B cell (primary cell): ENCODE measurements at regions of chr3 and their contacts with region 1.

Region 1: GRCh38 chr3:64030741-64031140 is 7.4 kb upstream of the PSMD6 start:
- DNase-seq: peak; percentile 88
- ATAC-seq: peak; percentile 96
- H3K4me3 ChIP-seq: peak overlapping the region; percentile 11 to 55 (median 41)
- H3K4me3 Mint-ChIP-seq: peak overlapping the region; percentile 89
- H3K27ac ChIP-seq: peak overlapping the region in 1 of 2 donors; percentile 11
- H3K27ac Mint-ChIP-seq: peak overlapping the region; percentile 69
- H3K4me1 ChIP-seq: peaks cover 3 to 8% of the 10 kb centered on the region in 2 donors
- H3K4me1 Mint-ChIP-seq: peaks cover 7% of the 10 kb centered on the region
- H3K27me3 ChIP-seq: peaks cover 2 to 20% (median 11%) of the 10 kb centered on the region in 4 experiments
- H3K27me3 Mint-ChIP-seq: peaks cover 24% of the 10 kb centered on the region
- CTCF ChIP-seq: peak; percentile 91

Region 2: GRCh38 chr3:63576901-63577335 is 453.8 kb before region 1 on chr3:
- CTCF ChIA-PET with region 1: no interaction called
- POLR2A ChIA-PET with region 1: no interaction called
- intact Hi-C with region 1: no loop called
- DNase-seq: no peak
- ATAC-seq: no peak
- H3K4me3 ChIP-seq: no peak overlapping the region
- H3K4me3 Mint-ChIP-seq: no peak overlapping the region
- H3K27ac ChIP-seq: no peak overlapping the region
- H3K27ac Mint-ChIP-seq: no peak overlapping the region
- H3K4me1 ChIP-seq: no peaks in the 10 kb centered on the region
- H3K4me1 Mint-ChIP-seq: no peaks in the 10 kb centered on the region
- H3K27me3 ChIP-seq: no peaks in the 10 kb centered on the region
- H3K27me3 Mint-ChIP-seq: peaks cover 3% of the 10 kb centered on the region
- CTCF ChIP-seq: no peak

Region 3: DNA sequence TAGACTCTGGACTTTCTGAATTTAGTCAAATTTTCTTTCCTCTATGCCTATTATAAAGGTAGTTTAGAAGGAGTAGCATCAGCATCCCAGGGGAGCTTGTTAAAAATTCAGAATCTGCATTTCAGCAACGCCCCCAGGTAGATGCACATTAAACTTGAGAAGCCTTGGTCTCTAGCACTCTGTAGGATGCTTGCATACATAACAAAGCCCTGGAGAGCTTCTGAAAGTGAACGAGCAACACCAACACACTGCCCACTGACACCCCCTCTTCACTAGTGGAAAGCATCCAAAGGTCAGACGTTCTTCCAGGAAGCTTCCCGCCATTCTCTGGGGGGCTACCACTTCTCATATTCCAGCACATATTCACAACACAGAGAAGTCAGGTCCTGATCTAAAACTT is 188.0 kb after region 1 on chr3:
- CTCF ChIA-PET with region 1: interaction called, 3 read pairs
- POLR2A ChIA-PET with region 1: no interaction called
- intact Hi-C with region 1: loop called (anchors 2 kb)
- DNase-seq: no peak
- ATAC-seq: no peak
- H3K4me3 ChIP-seq: no peak overlapping the region
- H3K4me3 Mint-ChIP-seq: no peak overlapping the region
- H3K27ac ChIP-seq: no peak overlapping the region
- H3K27ac Mint-ChIP-seq: no peak overlapping the region
- H3K4me1 ChIP-seq: peaks cover 0 to 2% of the 10 kb centered on the region in 2 donors
- H3K4me1 Mint-ChIP-seq: peaks cover 7% of the 10 kb centered on the region
- H3K27me3 ChIP-seq: peaks cover 0 to 4% (median 0%) of the 10 kb centered on the region in 4 experiments
- H3K27me3 Mint-ChIP-seq: no peaks in the 10 kb centered on the region
- CTCF ChIP-seq: no peak

Region 4: DNA sequence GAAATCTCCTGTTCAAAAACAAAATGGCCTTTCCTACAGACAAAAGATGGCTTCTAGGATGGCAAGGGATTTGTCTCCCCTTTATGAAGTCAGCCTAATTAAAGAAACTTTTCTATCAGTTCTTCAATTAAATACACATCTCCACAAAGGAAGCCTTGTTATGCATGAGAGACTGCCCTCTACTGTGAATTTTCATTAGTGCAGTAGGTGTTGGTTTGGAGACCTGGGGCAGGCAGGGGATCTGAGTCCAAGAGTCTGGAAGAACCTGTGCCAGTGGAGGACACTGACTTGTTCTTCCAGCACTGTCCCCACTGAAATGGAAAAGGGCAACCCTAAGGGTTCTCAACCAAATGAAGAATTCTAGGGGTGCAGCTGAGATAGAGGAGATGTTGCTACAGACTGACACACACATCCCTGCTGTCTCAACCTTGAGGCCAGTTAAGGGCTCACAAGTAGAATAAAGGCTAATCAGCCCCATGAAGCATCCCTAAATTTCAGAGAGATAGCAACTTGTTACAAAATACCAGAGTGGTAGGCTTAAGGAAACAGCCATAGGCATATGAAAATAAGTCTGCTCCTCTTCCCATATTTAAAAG is 368.6 kb after region 1 on chr3:
- CTCF ChIA-PET with region 1: interaction called, 10 read pairs
- POLR2A ChIA-PET with region 1: no interaction called
- intact Hi-C with region 1: no loop called
- DNase-seq: peak; percentile 45
- ATAC-seq: no peak
- H3K4me3 ChIP-seq: no peak overlapping the region
- H3K4me3 Mint-ChIP-seq: no peak overlapping the region
- H3K27ac ChIP-seq: no peak overlapping the region
- H3K27ac Mint-ChIP-seq: no peak overlapping the region
- H3K4me1 ChIP-seq: no peaks in the 10 kb centered on the region
- H3K4me1 Mint-ChIP-seq: no peaks in the 10 kb centered on the region
- H3K27me3 ChIP-seq: no peaks in the 10 kb centered on the region
- H3K27me3 Mint-ChIP-seq: no peaks in the 10 kb centered on the region
- CTCF ChIP-seq: peak; percentile 45

Region 5: DNA sequence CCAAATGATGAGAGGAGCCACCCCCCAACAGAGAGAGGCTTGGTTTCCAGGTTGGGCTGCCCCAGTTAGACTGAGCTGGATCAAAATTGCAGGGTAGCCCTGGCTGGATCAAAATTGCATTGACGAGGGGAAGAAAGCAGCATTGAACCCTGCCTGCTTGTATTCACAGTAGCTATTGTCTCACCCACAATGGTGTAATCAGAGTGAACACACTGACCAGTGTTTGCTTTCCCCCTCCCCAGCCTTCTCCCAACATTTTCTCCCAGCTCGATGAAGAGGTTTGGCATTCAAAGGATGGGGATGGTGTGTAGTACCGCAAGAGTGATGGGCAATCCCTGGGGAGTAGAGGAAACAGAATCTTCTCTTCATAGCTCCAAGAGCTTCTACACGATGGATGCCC is 433.2 kb after region 1 on chr3:
- CTCF ChIA-PET with region 1: interaction called, 17 read pairs
- POLR2A ChIA-PET with region 1: no interaction called
- intact Hi-C with region 1: no loop called
- DNase-seq: no peak
- ATAC-seq: no peak
- H3K4me3 ChIP-seq: no peak overlapping the region
- H3K4me3 Mint-ChIP-seq: no peak overlapping the region
- H3K27ac ChIP-seq: no peak overlapping the region
- H3K27ac Mint-ChIP-seq: no peak overlapping the region
- H3K4me1 ChIP-seq: no peaks in the 10 kb centered on the region
- H3K4me1 Mint-ChIP-seq: peaks cover 2% of the 10 kb centered on the region
- H3K27me3 ChIP-seq: peaks cover 0 to 2% (median 0%) of the 10 kb centered on the region in 4 experiments
- H3K27me3 Mint-ChIP-seq: peaks cover 25% of the 10 kb centered on the region
- CTCF ChIP-seq: no peak

Region 6: GRCh38 chr3:64484289-64484992 is 453.7 kb after region 1 on chr3:
- CTCF ChIA-PET with region 1: interaction called, 65 read pairs
- POLR2A ChIA-PET with region 1: no interaction called
- intact Hi-C with region 1: no loop called
- DNase-seq: peak; percentile 72
- ATAC-seq: peak; percentile 95
- H3K4me3 ChIP-seq: no peak overlapping the region
- H3K4me3 Mint-ChIP-seq: no peak overlapping the region
- H3K27ac ChIP-seq: no peak overlapping the region
- H3K27ac Mint-ChIP-seq: no peak overlapping the region
- H3K4me1 ChIP-seq: peaks cover 0 to 4% of the 10 kb centered on the region in 2 donors
- H3K4me1 Mint-ChIP-seq: peaks cover 4% of the 10 kb centered on the region
- H3K27me3 ChIP-seq: peaks cover 0 to 13% (median 1%) of the 10 kb centered on the region in 4 experiments
- H3K27me3 Mint-ChIP-seq: peaks cover 21% of the 10 kb centered on the region
- CTCF ChIP-seq: peak; percentile 84

Region 7: DNA sequence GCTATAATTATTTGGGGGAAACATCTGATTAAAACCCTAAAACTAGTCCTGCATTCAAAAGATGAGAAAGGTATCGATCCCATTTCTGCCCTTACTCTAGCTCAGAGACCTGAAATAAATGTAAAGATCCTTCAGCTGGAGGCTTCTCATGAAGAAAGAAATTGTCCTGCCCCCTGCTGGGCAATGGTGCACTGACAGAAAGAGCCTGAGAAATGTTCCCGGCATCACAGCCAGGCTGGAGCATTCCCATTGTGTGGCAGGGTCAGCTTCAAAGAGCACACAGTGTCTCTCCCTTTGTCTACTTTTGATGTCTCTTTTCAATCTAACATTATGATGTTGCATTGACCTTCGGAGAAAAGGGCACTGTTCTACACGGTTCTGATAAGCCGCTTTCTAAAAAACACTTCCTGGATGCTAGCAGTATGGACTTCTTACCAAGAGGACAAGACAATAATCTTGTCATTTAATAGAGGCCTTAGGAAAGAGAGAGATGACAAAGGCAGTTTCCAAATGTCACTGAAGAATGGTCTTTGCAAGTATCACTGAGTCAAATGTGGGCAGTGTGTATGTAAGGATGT is 1720.5 kb after region 1 on chr3:
- CTCF ChIA-PET with region 1: no interaction called
- POLR2A ChIA-PET with region 1: no interaction called
- intact Hi-C with region 1: loop called (anchors 5 kb)
- DNase-seq: no peak
- ATAC-seq: no peak
- H3K4me3 ChIP-seq: no peak overlapping the region
- H3K4me3 Mint-ChIP-seq: no peak overlapping the region
- H3K27ac ChIP-seq: no peak overlapping the region
- H3K27ac Mint-ChIP-seq: no peak overlapping the region
- H3K4me1 ChIP-seq: no peaks in the 10 kb centered on the region
- H3K4me1 Mint-ChIP-seq: no peaks in the 10 kb centered on the region
- H3K27me3 ChIP-seq: no peaks in the 10 kb centered on the region
- H3K27me3 Mint-ChIP-seq: no peaks in the 10 kb centered on the region
- CTCF ChIP-seq: no peak